CD14-positive monocyte (primary cell): ENCODE measurements at regions of chr3 and their contacts with region 1.

Region 1: GRCh38 chr3:32374788-32375595 is 16.7 kb upstream of the CMTM7 start:
- DNase-seq: peak; percentile 62 to 75 (median 68)
- H3K4me3 ChIP-seq: no peak overlapping the region
- H3K4me3 Mint-ChIP-seq: no peak overlapping the region
- H3K27ac ChIP-seq: no peak overlapping the region
- H3K27ac Mint-ChIP-seq: peak overlapping the region in 2 of 7 donors; percentile 55 to 70
- H3K4me1 ChIP-seq: peaks cover 3 to 5% of the 10 kb centered on the region in 2 donors
- H3K4me1 Mint-ChIP-seq: peaks cover 15% of the 10 kb centered on the region
- H3K27me3 ChIP-seq: no peaks in the 10 kb centered on the region
- H3K27me3 Mint-ChIP-seq: peaks cover 0 to 3% (median 2%) of the 10 kb centered on the region in 3 donors
- CTCF ChIP-seq: peak; percentile 82

Region 2: GRCh38 chr3:32438596-32439344 is 63.8 kb after region 1 on chr3:
- intact Hi-C with region 1: loop called in 1 of 2 experiments (anchors 10 kb)
- DNase-seq: no peak
- H3K4me3 ChIP-seq: no peak overlapping the region
- H3K4me3 Mint-ChIP-seq: no peak overlapping the region
- H3K27ac ChIP-seq: peak overlapping the region in 1 of 2 donors; percentile 31
- H3K27ac Mint-ChIP-seq: peak overlapping the region; percentile 3 to 59 (median 51)
- H3K4me1 ChIP-seq: peaks cover 1 to 2% of the 10 kb centered on the region in 2 donors
- H3K4me1 Mint-ChIP-seq: peaks cover 39% of the 10 kb centered on the region
- H3K27me3 ChIP-seq: no peaks in the 10 kb centered on the region
- H3K27me3 Mint-ChIP-seq: no peaks in the 10 kb centered on the region
- CTCF ChIP-seq: no peak

Region 3: GRCh38 chr3:32467333-32468070 is 92.5 kb after region 1 on chr3:
- intact Hi-C with region 1: loop called (anchors 2 to 5 kb)
- DNase-seq: peak; percentile 55 to 65 (median 59)
- H3K4me3 ChIP-seq: peak overlapping the region; percentile 33 to 79 (median 50)
- H3K4me3 Mint-ChIP-seq: peak overlapping the region; percentile 69 to 79
- H3K27ac ChIP-seq: no peak overlapping the region
- H3K27ac Mint-ChIP-seq: peak overlapping the region in 4 of 7 donors; percentile 3 to 44 (median 24)
- H3K4me1 ChIP-seq: peaks cover 24 to 28% of the 10 kb centered on the region in 2 donors
- H3K4me1 Mint-ChIP-seq: peaks cover 46% of the 10 kb centered on the region
- H3K27me3 ChIP-seq: no peaks in the 10 kb centered on the region
- H3K27me3 Mint-ChIP-seq: peaks cover 0 to 1% (median 0%) of the 10 kb centered on the region in 3 donors
- CTCF ChIP-seq: peak; percentile 99

Region 4: GRCh38 chr3:32667122-32667521 is 292.1 kb after region 1 on chr3:
- intact Hi-C with region 1: loop called in 1 of 2 experiments (anchors 10 kb)
- DNase-seq: no peak
- H3K4me3 ChIP-seq: no peak overlapping the region
- H3K4me3 Mint-ChIP-seq: no peak overlapping the region
- H3K27ac ChIP-seq: no peak overlapping the region
- H3K27ac Mint-ChIP-seq: no peak overlapping the region
- H3K4me1 ChIP-seq: no peaks in the 10 kb centered on the region
- H3K4me1 Mint-ChIP-seq: no peaks in the 10 kb centered on the region
- H3K27me3 ChIP-seq: no peaks in the 10 kb centered on the region
- H3K27me3 Mint-ChIP-seq: peaks cover 0 to 4% (median 0%) of the 10 kb centered on the region in 3 donors
- CTCF ChIP-seq: no peak